Activated CD4-positive, alpha-beta memory T cell treated with anti-CD3 and anti-CD28 coated beads for 36 hours (primary cell): ENCODE measurements at regions of chr16 and their contacts with region 1.

Region 1: GRCh38 chr16:714558-715476 is at the start of gene METRN:
- DNase-seq: peak; percentile 91
- H3K4me3 Mint-ChIP-seq: peak within 1 kb of the TSS; percentile 57
- H3K27ac Mint-ChIP-seq: no peak within 1 kb of the TSS
- H3K4me1 Mint-ChIP-seq: peaks cover 14% of the 10 kb centered on the region
- H3K27me3 Mint-ChIP-seq: peaks cover 14% of the 10 kb centered on the region
- total RNA-seq, gene METRN: 14.6 to 16.0 TPM

Region 2: DNA sequence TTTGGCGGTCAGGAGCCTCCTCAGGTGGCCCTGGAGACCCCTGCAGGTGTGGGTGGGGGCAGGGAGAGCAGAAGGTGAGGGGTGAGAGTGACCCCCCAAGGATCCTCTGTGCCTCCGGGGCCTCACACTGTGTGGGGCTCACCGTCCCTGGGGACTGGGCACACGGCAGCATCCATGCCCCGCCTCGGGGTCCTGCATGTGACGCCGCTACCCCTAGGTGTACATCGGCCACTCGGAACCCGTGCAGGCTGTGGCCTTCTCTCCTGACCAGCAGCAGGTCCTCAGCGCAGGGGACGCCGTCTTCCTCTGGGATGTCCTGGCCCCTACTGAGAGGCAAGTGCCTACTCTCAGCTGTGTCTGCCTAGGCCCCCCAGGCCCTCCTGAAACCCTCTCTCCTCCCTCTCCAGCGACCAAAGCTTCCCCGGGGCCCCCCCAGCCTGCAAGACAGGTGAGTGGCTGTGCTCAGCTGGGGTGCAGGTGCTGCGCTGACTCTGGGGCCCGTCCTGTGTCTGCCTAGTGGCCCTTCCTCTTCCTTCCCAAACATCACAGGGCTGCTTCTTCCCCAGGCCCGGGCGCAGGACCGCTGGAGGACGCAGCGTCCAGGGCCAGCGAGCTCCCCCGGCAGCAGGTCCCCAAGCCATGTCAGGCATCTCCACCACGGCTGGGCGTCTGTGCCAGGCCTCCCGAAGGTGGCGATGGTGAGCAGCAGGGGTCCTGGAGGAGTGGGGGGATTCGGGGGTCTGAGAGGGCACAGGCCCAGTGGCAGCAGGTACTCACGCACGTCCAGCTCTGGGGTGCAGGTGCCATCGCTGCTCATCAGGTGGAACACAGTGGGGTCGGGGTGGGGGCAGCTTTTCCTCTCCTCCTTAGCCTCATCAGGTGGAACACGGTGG is 55.9 kb before region 1 on chr16:
- CTCF ChIA-PET with region 1: no interaction called
- POLR2A ChIA-PET with region 1: no interaction called
- intact Hi-C with region 1: no loop called
- DNase-seq: no peak
- H3K4me3 Mint-ChIP-seq: no peak overlapping the region
- H3K27ac Mint-ChIP-seq: no peak overlapping the region
- H3K4me1 Mint-ChIP-seq: peaks cover 4% of the 10 kb centered on the region
- H3K27me3 Mint-ChIP-seq: no peaks in the 10 kb centered on the region

Region 3: DNA sequence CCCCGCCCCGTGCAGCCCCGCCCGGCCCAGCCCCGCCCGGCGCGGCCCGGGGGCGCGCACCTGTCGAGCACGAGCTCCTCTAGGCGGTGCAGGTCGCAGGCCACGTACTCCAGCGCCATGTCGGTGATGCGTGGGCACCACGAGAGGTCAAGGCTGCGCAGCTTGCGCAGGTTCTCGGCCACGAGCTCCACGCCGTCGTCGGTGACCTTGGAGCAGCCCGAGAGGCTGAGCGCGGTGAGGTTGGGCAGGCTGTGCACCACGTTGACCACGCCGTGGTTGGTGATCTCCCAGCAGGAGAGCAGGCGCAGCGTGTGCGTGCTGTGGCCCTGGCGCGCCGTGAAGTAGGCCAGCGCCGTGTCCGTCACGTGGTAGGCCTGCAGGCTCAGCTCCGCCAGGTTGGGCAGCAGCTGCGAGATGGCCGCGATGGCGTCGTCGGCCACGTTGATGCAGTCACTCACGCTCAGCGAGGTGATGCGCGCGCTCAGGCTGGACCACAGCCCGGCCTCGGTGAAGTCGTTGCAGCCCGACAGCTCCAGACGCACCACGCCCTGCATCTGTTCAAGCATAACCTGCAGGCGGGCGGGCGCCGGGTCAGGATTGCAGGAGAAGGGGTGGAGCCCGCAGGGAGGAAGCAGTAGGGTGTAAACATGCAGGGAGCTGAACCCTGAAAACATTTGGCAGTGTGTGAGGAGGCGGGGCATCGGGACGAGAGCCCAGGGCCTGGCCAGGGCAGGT is 19.3 kb before region 1 on chr16:
- CTCF ChIA-PET with region 1: interaction called, 14 read pairs
- POLR2A ChIA-PET with region 1: interaction called, 6 read pairs
- intact Hi-C with region 1: no loop called
- DNase-seq: peak; percentile 84
- H3K4me3 Mint-ChIP-seq: peak overlapping the region; percentile 80
- H3K27ac Mint-ChIP-seq: peak overlapping the region; percentile 71
- H3K4me1 Mint-ChIP-seq: peaks cover 23% of the 10 kb centered on the region
- H3K27me3 Mint-ChIP-seq: no peaks in the 10 kb centered on the region

Region 4: GRCh38 chr16:728131-728889 is 13.5 kb after region 1 on chr16:
- CTCF ChIA-PET with region 1: interaction called, 33 read pairs
- POLR2A ChIA-PET with region 1: interaction called, 9 read pairs
- intact Hi-C with region 1: no loop called
- DNase-seq: peak; percentile 72
- H3K4me3 Mint-ChIP-seq: peak overlapping the region; percentile 57
- H3K27ac Mint-ChIP-seq: no peak overlapping the region
- H3K4me1 Mint-ChIP-seq: no peaks in the 10 kb centered on the region
- H3K27me3 Mint-ChIP-seq: no peaks in the 10 kb centered on the region

Region 5: GRCh38 chr16:740764-741505 is 26.1 kb after region 1 on chr16 and contains the start of gene CIAO3:
- CTCF ChIA-PET with region 1: interaction called, 21 read pairs
- POLR2A ChIA-PET with region 1: interaction called, 14 read pairs
- intact Hi-C with region 1: loop called (anchors 1 kb)
- DNase-seq: peak; percentile 95
- H3K4me3 Mint-ChIP-seq: peak within 1 kb of the TSS; percentile 82
- H3K27ac Mint-ChIP-seq: no peak within 1 kb of the TSS
- H3K4me1 Mint-ChIP-seq: peaks cover 23% of the 10 kb centered on the region
- H3K27me3 Mint-ChIP-seq: no peaks in the 10 kb centered on the region
- total RNA-seq, gene CIAO3: 31.8 to 32.2 TPM

Region 6: DNA sequence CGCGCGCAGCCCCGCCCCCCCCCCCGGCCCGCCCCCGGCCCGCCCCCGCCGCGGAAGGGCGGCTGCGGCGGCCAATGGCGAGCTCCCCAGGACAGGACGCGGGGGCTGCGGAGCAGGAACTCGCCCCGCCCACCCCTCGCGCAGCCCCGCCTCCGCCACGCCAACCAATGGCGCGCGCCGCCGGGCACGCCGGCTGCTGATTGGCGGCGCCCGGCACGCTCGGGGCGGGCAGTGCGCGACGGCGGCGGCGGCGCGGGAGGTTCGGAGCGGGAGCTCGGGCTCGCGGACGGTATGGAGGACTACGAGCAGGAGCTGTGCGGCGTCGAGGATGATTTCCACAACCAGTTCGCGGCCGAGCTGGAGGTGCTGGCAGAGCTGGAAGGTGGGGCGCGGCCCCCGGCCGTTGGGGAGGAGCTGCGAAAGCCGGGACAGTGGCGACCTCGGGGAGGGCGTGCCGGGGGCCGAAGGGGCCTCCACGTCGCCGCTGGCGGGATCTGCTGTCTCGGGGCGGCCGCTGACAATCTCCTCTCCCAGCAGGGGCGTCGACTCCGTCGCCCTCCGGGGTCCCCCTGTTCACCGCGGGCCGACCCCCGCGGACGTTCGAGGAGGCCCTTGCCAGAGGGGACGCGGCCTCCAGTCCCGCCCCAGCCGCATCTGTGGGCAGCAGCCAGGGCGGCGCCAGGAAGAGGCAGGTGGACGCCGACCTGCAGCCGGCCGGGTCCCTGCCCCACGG is 73.7 kb after region 1 on chr16 and contains the start of gene CHTF18:
- CTCF ChIA-PET with region 1: interaction called, 120 read pairs
- POLR2A ChIA-PET with region 1: interaction called, 5 read pairs
- intact Hi-C with region 1: loop called (anchors 1 kb)
- DNase-seq: peak; percentile 97
- H3K4me3 Mint-ChIP-seq: peak within 1 kb of the TSS; percentile 87
- H3K27ac Mint-ChIP-seq: peak within 1 kb of the TSS; percentile 60
- H3K4me1 Mint-ChIP-seq: peaks cover 5% of the 10 kb centered on the region
- H3K27me3 Mint-ChIP-seq: no peaks in the 10 kb centered on the region
- total RNA-seq, gene CHTF18: 101 to 102 TPM